Activated CD4-positive, alpha-beta T cell treated with anti-CD3 and anti-CD28 coated beads for 36 hours (primary cell): ENCODE measurements at regions of chr11 and their contacts with region 1.

Region 1: DNA sequence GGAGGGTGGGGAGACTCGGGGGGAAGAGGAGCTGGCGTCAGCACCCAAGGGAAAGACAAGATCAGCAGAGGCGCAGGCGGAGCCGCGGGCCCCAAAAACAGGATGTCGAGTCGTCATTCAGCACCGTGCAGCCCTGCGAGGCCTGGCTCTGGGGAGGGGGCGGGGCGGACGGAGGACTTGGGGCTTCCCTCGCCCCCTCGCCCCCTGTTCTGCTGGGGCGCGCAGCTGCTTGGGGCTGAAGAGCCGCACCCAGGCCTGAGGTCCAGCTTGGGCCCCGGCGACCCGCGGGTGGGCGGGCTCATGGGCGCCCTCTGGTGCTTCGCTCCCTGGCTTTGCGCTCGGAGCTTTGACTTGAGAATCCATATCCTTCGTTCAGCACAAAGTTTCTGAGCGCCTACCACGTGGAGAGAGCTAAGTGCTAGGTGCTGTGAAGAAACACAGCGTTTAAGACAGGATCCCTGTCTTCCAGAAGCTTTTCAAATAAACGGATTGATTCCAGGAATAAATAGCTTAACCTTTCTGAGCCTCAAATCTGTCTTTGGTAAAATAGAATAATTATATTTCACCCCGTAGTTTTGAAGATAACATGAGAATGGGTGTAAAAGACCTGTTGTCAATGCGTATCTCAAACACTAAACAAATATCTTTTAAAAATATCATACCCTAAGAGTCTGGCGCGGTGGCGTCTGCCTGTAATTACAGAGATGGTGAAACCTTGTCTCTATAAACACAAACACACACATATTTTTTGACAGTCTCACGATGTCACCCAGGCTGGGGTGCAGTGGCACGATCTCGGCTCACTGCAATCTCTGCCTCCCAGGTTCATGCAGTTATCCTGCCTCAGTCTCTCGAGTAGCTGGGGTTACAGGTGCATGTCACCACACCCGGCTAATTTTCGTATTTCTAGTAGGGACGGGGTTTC is 929 bp upstream of the RHOG start:
- DNase-seq: peak; percentile 97
- ATAC-seq: peak; percentile 30
- H3K4me3 Mint-ChIP-seq: peak overlapping the region; percentile 93
- H3K27ac Mint-ChIP-seq: peak overlapping the region; percentile 93
- H3K4me1 Mint-ChIP-seq: peaks cover 54% of the 10 kb centered on the region
- H3K27me3 Mint-ChIP-seq: no peaks in the 10 kb centered on the region

Region 2: GRCh38 chr11:3781423-3781822 is 60.3 kb before region 1 on chr11:
- CTCF ChIA-PET with region 1: interaction called, 5 read pairs
- POLR2A ChIA-PET with region 1: interaction called, 8 read pairs
- intact Hi-C with region 1: loop called in 1 of 2 experiments (anchors 1 kb)
- DNase-seq: no peak
- ATAC-seq: no peak
- H3K4me3 Mint-ChIP-seq: no peak overlapping the region
- H3K27ac Mint-ChIP-seq: peak overlapping the region; percentile 72
- H3K4me1 Mint-ChIP-seq: peaks cover 47% of the 10 kb centered on the region
- H3K27me3 Mint-ChIP-seq: no peaks in the 10 kb centered on the region

Region 3: GRCh38 chr11:4060182-4060923 is 218.7 kb after region 1 on chr11:
- CTCF ChIA-PET with region 1: interaction called, 4 read pairs
- POLR2A ChIA-PET with region 1: interaction called, 13 read pairs
- intact Hi-C with region 1: loop called in 1 of 2 experiments (anchors 1 kb)
- DNase-seq: no peak
- ATAC-seq: no peak
- H3K4me3 Mint-ChIP-seq: no peak overlapping the region
- H3K27ac Mint-ChIP-seq: no peak overlapping the region
- H3K4me1 Mint-ChIP-seq: peaks cover 37% of the 10 kb centered on the region
- H3K27me3 Mint-ChIP-seq: no peaks in the 10 kb centered on the region

Region 4: DNA sequence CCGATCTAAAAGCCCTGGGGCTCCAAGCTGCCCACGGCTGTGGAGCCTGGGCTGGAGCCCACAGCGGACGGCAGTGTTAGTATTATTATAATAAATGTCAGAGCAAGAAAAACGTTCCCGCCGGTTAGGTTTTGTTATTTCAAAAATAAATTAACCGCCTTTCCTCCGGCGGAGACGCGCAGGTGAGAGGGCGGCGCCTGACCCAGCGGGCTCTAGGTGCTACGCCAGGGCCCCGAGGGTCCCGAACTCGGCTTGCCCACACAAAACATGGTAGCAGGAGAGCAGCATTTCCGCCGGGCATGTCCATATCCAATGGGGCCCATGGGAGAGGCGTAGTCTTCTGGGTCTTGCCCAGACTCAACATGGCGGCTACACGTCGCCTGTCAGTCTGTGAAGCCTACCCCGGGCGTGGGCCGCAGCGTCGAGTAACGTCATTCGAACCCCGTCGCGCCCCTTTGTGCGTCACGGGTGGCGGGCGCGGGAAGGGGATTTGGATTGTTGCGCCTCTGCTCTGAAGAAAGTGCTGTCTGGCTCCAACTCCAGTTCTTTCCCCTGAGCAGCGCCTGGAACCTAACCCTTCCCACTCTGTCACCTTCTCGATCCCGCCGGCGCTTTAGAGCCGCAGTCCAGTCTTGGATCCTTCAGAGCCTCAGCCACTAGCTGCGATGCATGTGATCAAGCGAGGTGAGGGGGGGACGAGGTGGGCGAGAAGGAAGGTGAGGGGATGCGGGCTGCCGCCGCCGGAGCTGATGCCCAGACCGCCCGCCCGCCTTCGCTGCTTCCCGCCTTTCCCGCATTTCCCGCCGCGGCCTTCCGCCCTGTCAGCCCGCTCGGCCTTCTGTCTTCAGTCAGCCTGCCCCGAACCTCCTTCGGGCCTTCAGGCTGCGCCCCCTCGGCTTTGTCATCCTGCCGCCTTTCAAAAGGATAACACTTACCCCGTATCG is 252.9 kb after region 1 on chr11 and contains the start of gene RRM1:
- CTCF ChIA-PET with region 1: no interaction called
- POLR2A ChIA-PET with region 1: interaction called, 7 read pairs
- intact Hi-C with region 1: loop called in 1 of 2 experiments (anchors 1 kb)
- DNase-seq: peak; percentile 96
- ATAC-seq: peak; percentile 96
- H3K4me3 Mint-ChIP-seq: peak within 1 kb of the TSS; percentile 98
- H3K27ac Mint-ChIP-seq: peak within 1 kb of the TSS; percentile 97
- H3K4me1 Mint-ChIP-seq: peaks cover 71% of the 10 kb centered on the region
- H3K27me3 Mint-ChIP-seq: no peaks in the 10 kb centered on the region
- total RNA-seq, gene RRM1: 220 to 259 TPM